ENCODE measurements at regions of chr1 and their contacts with region 1.

Region 1: GRCh38 chr1:52334906-52335528 is 31.0 kb downstream of the CC2D1B start:
- DNase-seq: no peak
- ATAC-seq: no peak
- H3K4me3 ChIP-seq: no peak overlapping the region
- H3K4me3 Mint-ChIP-seq: no peak overlapping the region
- H3K27ac ChIP-seq: no peak overlapping the region
- H3K27ac Mint-ChIP-seq: no peak overlapping the region
- H3K4me1 ChIP-seq: no peaks in the 10 kb centered on the region
- H3K4me1 Mint-ChIP-seq: no peaks in the 10 kb centered on the region
- H3K27me3 ChIP-seq: no peaks in the 10 kb centered on the region
- H3K27me3 Mint-ChIP-seq: no peaks in the 10 kb centered on the region
- CTCF ChIP-seq: no peak

Region 2: GRCh38 chr1:52321061-52321460 is 14.0 kb before region 1 on chr1:
- CTCF ChIA-PET with region 1: interaction called, 5 read pairs
- POLR2A ChIA-PET with region 1: interaction called, 11 read pairs
- intact Hi-C with region 1: no loop called
- DNase-seq: no peak
- ATAC-seq: no peak
- H3K4me3 ChIP-seq: no peak overlapping the region
- H3K4me3 Mint-ChIP-seq: no peak overlapping the region
- H3K27ac ChIP-seq: no peak overlapping the region
- H3K27ac Mint-ChIP-seq: no peak overlapping the region
- H3K4me1 ChIP-seq: no peaks in the 10 kb centered on the region
- H3K4me1 Mint-ChIP-seq: no peaks in the 10 kb centered on the region
- H3K27me3 ChIP-seq: no peaks in the 10 kb centered on the region
- H3K27me3 Mint-ChIP-seq: peaks cover 4% of the 10 kb centered on the region
- CTCF ChIP-seq: no peak

Region 3: DNA sequence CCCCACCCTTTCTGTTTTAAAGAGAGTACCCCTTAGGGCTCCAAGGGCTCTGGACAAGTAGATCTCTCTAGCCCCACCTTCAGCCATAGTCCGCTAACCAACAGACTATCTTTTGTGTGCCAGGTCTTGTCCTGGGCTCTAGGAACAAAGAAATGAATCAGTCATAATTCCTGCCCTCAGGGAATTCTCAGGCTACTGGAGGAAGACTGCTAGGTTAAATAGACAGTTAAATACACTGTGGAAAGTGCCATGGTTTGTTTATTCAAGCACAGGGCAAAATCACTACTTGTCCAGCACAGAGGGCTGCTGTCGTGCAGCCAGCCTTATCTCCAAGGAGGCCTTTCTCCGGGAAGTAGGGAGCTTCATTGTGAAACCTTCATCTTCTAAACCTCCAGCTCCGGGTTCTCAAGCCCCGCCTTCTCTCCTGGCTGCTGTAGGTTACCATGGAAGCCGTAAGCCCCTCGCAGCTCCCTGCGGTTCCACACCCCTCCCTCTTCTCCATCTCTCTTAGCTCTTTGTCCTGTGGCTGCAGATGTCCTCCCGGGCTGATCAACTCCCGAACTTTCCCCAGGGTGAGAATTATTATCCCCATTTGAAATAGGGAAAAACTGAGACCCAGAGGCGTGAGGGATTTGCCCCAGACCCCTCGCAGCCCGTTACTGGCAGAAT is 327.8 kb after region 1 on chr1:
- CTCF ChIA-PET with region 1: no interaction called
- POLR2A ChIA-PET with region 1: no interaction called
- intact Hi-C with region 1: no loop called
- DNase-seq: no peak
- ATAC-seq: no peak
- H3K4me3 ChIP-seq: no peak overlapping the region
- H3K4me3 Mint-ChIP-seq: no peak overlapping the region
- H3K27ac ChIP-seq: peak overlapping the region in 1 of 2 donors; percentile 15
- H3K27ac Mint-ChIP-seq: peak overlapping the region; percentile 66
- H3K4me1 ChIP-seq: peaks cover 4 to 8% of the 10 kb centered on the region in 2 donors
- H3K4me1 Mint-ChIP-seq: peaks cover 35% of the 10 kb centered on the region
- H3K27me3 ChIP-seq: no peaks in the 10 kb centered on the region
- H3K27me3 Mint-ChIP-seq: no peaks in the 10 kb centered on the region
- CTCF ChIP-seq: no peak